Activated CD4-positive, alpha-beta T cell treated with anti-CD3 and anti-CD28 coated beads for 36 hours (primary cell): ENCODE measurements at regions of chr2 and their contacts with region 1.

Region 1: DNA sequence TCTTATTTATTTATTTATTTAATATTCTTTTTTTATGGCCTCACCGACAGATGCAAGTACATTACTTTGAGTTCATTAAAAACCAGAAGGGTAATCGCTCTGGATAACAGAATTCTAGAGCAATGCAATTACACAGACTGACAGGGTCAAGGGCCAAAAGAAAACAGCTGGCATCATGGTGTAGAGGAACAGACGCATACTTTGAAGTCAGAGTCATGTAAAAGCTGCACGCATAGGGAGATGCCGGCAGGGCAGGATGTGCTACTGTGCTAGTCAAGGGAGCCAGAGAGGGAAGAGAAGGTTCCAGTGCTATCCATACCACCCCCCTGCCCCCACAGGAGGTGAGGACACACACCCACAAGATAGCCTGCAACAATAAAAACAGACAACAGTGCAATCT is 115.2 kb upstream of the TFCP2L1 start:
- DNase-seq: no peak
- ATAC-seq: no peak
- H3K4me3 Mint-ChIP-seq: no peak overlapping the region
- H3K27ac Mint-ChIP-seq: no peak overlapping the region
- H3K4me1 Mint-ChIP-seq: peaks cover 2% of the 10 kb centered on the region
- H3K27me3 Mint-ChIP-seq: no peaks in the 10 kb centered on the region

Region 2: GRCh38 chr2:121382744-121383143 is 17.5 kb before region 1 on chr2:
- CTCF ChIA-PET with region 1: no interaction called
- POLR2A ChIA-PET with region 1: no interaction called
- intact Hi-C with region 1: no loop called
- DNase-seq: no peak
- ATAC-seq: no peak
- H3K4me3 Mint-ChIP-seq: no peak overlapping the region
- H3K27ac Mint-ChIP-seq: no peak overlapping the region
- H3K4me1 Mint-ChIP-seq: peaks cover 7% of the 10 kb centered on the region
- H3K27me3 Mint-ChIP-seq: no peaks in the 10 kb centered on the region

Region 3: GRCh38 chr2:121412349-121412748 is 12.1 kb after region 1 on chr2:
- CTCF ChIA-PET with region 1: interaction called, 15 read pairs
- POLR2A ChIA-PET with region 1: interaction called, 3 read pairs
- intact Hi-C with region 1: no loop called
- DNase-seq: no peak
- ATAC-seq: no peak
- H3K4me3 Mint-ChIP-seq: no peak overlapping the region
- H3K27ac Mint-ChIP-seq: no peak overlapping the region
- H3K4me1 Mint-ChIP-seq: no peaks in the 10 kb centered on the region
- H3K27me3 Mint-ChIP-seq: no peaks in the 10 kb centered on the region